ENCODE measurements at regions of chr12 and their contacts with region 1.

Region 1: DNA sequence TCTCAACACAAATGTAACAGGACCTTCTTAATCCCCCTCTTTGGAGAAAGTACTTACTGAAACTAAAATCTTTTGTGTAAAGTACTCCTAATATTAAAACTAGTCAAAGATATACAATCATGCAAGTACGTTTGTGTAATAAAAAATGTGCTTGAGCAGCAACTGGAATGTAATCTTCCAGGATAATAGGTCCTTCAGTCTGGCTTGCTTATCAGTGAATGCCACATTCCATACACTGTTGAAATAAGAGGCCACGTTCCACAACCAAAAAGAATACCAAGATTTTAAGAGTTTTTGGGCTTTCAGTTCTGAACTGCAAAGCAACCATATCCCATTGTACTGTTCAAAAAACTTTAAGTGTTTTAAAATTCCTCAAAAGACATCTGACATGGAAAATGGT is 26.2 kb upstream of the GRIN2B start:
- DNase-seq: no peak
- ATAC-seq: no peak
- H3K4me3 ChIP-seq: no peak overlapping the region
- H3K27ac ChIP-seq: no peak overlapping the region
- H3K4me1 ChIP-seq: no peaks in the 10 kb centered on the region
- H3K27me3 ChIP-seq: no peaks in the 10 kb centered on the region
- CTCF ChIP-seq: no peak

Region 2: DNA sequence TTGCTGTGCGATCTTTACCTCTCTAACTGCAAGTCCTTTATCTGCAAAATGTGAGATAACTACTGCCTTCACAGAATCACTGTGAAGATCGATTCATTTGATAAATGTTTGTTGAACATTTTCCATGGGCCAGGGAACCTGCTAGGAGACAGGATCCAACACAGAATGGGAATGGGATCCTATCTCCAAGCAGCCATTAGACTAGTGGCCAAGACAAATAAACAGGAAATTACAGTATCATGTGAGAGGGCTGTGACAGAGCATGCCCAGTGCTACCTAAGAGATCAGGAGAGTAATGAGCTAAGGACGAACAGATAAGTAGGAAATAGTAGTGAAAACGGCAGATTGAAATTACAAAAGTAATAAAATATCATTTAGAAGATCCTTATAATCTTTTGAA is 131.9 kb before region 1 on chr12:
- intact Hi-C with region 1: no loop called
- DNase-seq: no peak
- ATAC-seq: no peak
- H3K4me3 ChIP-seq: no peak overlapping the region
- H3K27ac ChIP-seq: no peak overlapping the region
- H3K4me1 ChIP-seq: no peaks in the 10 kb centered on the region
- H3K27me3 ChIP-seq: no peaks in the 10 kb centered on the region
- CTCF ChIP-seq: no peak

Region 3: DNA sequence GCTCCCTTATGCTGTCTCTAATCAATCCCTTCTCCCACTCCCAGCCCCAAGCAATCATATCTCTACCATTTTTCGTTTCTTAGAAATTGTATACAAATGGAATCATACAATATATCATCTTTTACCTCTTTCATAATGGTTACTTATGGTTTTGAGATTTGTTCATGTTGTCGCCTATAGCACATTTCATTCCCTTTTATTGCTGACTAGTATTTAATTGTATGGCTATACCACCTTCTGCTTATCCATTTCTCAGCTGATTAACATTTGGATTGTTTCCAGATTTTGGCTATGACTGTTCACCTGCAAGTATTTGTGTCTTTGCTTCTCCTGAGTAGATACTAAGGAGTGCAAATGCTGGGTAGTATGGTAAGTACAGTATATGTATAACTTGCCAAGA is 10.4 kb after region 1 on chr12:
- intact Hi-C with region 1: loop called in 1 of 2 experiments (anchors 1 kb)
- DNase-seq: no peak
- ATAC-seq: no peak
- H3K4me3 ChIP-seq: no peak overlapping the region
- H3K27ac ChIP-seq: no peak overlapping the region
- H3K4me1 ChIP-seq: no peaks in the 10 kb centered on the region
- H3K27me3 ChIP-seq: no peaks in the 10 kb centered on the region
- CTCF ChIP-seq: no peak